GM23248 (cell line): ENCODE measurements at regions of chr1 and their contacts with region 1.

Region 1: DNA sequence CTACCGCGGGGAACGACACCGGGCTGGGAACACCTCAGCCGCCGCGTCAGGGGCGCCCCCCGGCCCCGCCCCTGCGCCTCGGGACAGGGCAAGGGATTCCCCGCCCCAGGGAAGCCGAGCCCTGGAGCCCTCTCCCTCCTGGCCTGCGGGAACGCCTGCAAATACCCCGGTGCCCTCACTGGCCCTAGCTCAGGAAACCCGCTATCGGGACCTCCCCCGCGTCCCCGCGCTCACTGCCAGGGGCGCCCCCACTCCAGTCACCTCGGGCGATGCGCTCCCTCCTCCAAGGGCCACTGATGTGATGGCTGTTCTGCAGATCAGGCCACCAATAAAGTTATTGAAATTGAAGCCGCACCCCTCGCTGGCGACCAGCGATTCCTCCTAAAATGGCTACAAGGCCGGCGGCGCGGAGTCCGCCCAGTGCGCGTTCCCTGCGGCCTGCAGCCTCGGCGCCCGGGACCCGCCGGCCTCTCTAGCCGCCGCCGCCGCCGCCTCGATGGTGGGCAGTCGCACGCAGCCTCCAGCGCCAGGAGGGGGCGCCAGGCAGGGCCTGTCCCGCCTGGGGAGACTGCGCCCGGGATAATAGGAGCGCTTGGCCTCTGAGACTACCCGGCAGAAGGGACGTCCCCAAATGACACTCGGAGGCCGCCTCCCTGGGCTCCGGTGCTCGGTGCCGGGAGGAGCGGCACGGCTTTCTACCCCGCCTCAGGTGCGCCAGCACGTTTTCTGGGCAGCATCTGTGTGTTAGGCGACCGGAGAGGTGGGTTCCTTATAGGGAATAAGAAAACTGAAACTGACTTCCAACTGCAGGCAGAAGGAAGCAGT is at the start of gene PRKAB2:
- DNase-seq: peak; percentile 98
- H3K4me3 ChIP-seq: peak within 1 kb of the TSS; percentile 96
- H3K27ac ChIP-seq: peak within 1 kb of the TSS; percentile 90
- H3K4me1 ChIP-seq: peaks cover 46% of the 10 kb centered on the region
- H3K27me3 ChIP-seq: no peaks in the 10 kb centered on the region
- total RNA-seq, gene PRKAB2: 24.6 and 42.2 TPM in 2 replicates

Region 2: DNA sequence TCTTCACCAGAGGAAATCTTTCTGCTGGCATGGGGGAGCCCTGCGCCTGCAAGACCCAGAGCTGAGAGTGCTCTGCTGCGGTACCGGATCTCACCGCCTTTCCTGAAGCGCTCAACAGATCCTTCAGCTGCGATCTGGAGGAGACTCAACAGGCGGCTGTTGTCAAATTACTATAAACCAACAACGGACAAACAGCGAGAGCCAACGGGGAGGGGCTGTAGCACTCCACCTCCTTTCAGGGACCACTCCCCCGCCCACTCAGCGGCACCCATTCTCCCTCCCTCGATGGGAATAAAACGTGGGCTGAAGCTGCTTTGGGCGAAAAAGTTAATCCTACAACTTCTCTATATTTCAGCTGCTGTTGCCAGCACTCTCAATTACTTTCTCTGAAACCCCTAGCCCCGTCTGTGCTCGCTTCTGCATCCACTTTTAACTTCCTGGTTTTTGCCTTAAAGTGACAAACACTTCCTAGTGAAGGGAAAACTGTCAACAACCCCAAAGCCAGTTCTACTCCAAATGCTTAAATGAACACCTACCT is 52.9 kb after region 1 on chr1 and contains the start of gene FMO5:
- in situ Hi-C with region 1: loop called (anchors 10 kb)
- DNase-seq: peak; percentile 82
- H3K4me3 ChIP-seq: peak within 1 kb of the TSS; percentile 94
- H3K27ac ChIP-seq: peak within 1 kb of the TSS; percentile 22
- H3K4me1 ChIP-seq: no peaks in the 10 kb centered on the region
- H3K27me3 ChIP-seq: no peaks in the 10 kb centered on the region
- total RNA-seq, gene FMO5: 1.8 and 4.9 TPM in 2 replicates

Region 3: DNA sequence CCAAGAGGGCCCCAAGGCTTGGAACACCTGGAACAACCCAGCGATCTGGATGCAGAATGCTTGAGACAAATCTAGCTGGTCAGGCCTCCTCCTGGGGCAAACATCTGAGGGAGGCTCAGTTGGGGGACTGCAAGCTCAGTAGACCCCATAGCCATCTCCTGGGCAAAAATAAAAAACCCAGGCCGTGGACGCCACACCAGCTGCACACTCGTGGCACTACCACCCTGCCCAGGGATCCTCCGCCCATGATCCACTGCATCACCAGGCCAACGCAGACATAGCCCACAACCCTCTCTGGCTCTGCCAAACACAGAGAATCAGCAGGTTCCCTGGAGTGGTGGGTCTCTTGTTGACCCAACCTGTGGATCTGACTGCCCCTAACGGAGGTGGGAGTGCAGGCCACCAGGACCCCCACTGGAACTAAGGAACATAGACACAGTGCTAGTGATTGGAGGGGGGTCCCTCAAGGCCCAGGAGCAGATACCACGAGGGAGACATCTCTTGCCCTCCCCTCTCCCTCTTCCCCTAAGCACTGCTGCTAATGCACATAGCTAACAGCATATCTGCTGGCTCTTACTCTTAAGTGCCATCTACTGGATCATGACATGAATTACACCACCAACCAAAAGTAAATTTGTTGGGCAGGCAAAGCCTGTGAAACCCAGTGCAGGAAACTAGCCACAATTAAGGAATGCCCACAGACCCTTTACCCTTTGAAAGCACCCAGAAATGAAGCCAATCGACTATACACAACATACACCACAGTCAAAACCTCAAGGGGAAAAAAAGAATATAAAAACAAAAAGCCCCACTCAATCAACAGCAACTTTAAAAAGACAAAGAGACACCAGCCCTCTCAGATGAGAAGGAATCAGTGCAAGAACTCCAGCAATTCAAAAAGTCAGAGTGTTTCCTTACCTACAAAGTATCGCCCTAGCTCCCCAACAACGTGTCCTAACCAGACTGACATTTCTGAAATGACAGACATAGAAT is 217.4 kb after region 1 on chr1:
- in situ Hi-C with region 1: no loop called
- DNase-seq: peak; percentile 66
- H3K4me3 ChIP-seq: no peak overlapping the region
- H3K27ac ChIP-seq: no peak overlapping the region
- H3K4me1 ChIP-seq: no peaks in the 10 kb centered on the region
- H3K27me3 ChIP-seq: no peaks in the 10 kb centered on the region